Cardiac septum (tissue), 1 donor: ENCODE measurements at regions of chr17 and their contacts with region 1.

Region 1: DNA sequence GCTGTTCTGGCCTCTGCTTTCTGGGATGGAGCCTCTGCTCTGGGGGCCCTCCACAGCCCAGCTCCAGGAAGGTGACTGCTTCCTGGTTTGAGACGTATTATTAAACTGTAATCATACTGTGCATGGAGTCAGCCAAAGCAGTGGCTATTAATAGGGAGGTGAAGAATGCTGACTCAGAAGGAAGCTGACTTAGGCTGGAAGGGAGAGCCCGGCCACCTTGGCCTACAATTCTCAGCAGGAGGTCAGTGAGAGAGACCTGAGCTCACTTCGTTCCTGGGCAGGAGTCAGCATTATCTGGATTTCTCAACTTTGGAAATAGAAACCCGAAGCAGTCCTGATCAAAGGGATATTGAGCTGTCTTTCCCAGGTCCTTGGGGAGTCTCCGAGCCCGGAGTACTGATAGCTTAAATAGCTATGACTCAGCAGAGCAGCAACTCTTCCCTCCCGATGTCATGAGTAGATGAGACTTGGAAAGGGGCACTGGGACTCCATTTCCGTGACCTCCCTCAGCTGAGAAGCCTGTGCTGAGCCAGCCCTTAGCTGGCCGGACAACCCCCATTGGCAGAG is 91.8 kb downstream of the YPEL2 start:
- DNase-seq: no peak

Region 2: GRCh38 chr17:59277031-59277430 is 146.2 kb before region 1 on chr17:
- intact Hi-C with region 1: no loop called
- DNase-seq: no peak

Region 3: DNA sequence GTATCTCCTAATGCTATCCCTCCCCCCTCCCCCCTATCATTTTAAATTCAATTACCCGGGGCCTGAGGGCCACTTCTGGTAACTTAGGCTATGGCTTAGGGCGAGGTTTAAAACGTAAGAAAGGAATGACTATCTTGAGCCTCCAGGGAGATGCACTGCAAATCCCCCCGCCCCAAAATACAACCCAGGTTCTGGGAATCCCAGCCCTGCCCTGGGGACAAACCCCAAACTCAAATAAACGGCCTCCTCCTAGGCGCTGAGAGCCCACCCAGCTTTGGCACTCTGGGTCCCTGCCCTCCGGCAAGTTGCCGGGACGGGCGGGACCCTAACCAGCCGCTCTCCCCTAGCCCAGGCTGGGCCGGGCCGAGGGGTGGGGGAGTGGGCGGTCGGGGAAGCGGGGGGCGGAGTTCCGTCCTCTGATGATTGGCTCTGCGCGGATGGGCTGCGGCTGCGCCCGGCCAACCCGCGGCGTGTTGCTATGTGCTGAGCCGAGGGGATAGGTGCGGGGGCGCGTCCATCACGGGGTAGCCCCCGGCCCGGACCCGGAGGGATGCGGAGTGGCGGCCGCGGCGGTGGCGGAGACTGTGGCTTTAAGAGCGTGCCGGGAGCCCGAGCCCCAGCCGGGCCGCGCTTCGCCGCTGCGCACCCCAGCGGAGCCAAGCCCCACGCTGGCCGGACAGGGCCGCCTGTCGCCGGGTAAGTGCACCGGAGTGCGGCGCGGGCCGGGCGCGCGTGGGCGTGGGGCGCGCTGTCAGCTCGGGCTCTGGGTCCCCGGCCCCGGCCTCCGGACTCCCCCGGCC is 91.9 kb before region 1 on chr17 and contains the start of gene YPEL2:
- intact Hi-C with region 1: loop called (anchors 1 kb)
- DNase-seq: peak; percentile 99
- total RNA-seq, gene YPEL2: 59.4 TPM

Region 4: GRCh38 chr17:59372138-59372857 is 50.9 kb before region 1 on chr17:
- intact Hi-C with region 1: loop called (anchors 1 kb)
- DNase-seq: no peak

Region 5: DNA sequence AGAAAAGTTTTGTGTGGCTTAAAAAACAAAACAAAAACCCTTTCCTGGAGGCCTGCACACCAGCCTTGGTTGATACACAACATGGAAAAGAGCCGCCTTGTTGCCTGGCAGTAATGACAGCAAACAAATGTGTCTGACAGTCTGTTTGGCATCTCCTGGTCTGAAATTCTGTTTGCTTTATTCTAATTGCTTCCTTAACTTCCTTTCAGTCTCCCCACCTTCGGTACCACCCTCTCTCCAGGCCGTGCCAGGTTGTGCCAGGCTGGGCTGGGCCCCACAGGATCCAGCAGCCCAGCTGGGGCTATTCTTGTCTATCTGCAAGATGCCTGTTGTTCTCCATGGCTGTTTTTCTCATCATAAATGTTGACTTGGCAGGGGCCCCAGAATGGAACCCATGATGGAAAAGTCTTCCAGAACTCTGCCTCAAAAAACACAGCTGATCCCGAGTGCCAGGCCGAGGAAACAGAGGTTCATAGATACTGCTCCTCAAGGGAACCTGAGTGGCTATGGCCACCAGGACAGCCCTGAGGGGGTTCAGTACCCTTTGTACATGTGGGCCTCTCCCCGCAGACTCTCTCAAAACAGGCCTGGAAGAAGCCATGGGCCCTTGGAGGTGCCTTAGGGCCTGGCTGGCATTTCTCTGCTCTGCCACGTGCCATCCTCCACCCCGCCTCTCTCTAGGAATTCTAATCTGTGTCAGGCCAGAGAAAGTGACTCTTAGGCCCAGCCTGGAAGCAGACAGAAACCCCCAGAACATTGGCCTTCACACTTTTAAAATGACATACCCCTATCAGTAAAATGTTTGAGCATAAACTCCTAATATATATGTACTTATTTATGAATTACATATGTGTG is 41.3 kb before region 1 on chr17:
- intact Hi-C with region 1: loop called (anchors 2 kb)
- DNase-seq: peak; percentile 83

Region 6: GRCh38 chr17:59440784-59441441 is 17.7 kb after region 1 on chr17:
- intact Hi-C with region 1: loop called (anchors 2 kb)
- DNase-seq: peak; percentile 93

Region 7: GRCh38 chr17:59456428-59456827 is 33.2 kb after region 1 on chr17:
- intact Hi-C with region 1: no loop called
- DNase-seq: no peak